Activated CD8-positive, alpha-beta T cell treated with anti-CD3 and anti-CD28 coated beads, Interleukin-2, amount 10 ng/mL, durations not matched to agents 7 days and 5 days (primary cell): ENCODE measurements at regions of chr12 and their contacts with region 1.

Region 1: GRCh38 chr12:21677622-21678277 is 20.1 kb upstream of the LDHB start:
- DNase-seq: no peak
- ATAC-seq: no peak
- H3K4me3 Mint-ChIP-seq: no peak overlapping the region
- H3K27ac Mint-ChIP-seq: no peak overlapping the region
- H3K4me1 Mint-ChIP-seq: peaks cover 32% of the 10 kb centered on the region
- H3K27me3 Mint-ChIP-seq: no peaks in the 10 kb centered on the region

Region 2: DNA sequence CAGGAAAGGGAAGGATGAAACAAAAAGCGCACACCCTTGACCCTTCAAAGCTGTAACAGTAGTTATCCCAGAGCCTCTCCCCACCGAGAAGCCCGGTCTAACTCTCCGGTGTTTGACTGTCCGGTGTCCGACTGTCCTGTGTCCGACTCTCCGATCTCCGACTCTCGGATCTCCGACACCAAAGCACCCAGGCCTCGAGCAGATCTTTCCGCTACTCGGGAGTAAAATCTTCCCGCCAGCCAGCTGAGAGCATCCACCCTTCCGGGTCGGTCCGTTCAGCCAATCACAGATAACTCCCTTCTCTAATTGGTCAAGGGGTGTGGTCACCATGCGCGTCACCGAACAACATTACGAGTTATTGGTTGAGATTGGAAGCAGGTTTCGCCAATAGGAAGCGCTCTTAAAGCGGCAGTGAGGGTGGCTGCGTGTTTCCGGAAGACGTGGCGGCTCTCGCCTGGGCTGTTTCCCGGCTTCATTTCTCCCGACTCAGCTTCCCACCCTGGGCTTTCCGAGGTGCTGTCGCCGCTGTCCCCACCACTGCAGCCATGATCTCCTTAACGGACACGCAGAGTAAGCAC is 176.3 kb before region 1 on chr12 and contains the starts of genes GOLT1B and RECQL:
- CTCF ChIA-PET with region 1: interaction called, 15 read pairs
- POLR2A ChIA-PET with region 1: interaction called, 4 read pairs
- DNase-seq: peak; percentile 96
- ATAC-seq: peak; percentile 95
- H3K4me3 Mint-ChIP-seq: no peak within 1 kb of the TSS
- H3K27ac Mint-ChIP-seq: no peak within 1 kb of the TSS
- H3K4me1 Mint-ChIP-seq: peaks cover 54% of the 10 kb centered on the region
- H3K27me3 Mint-ChIP-seq: no peaks in the 10 kb centered on the region
- total RNA-seq, gene GOLT1B: 37.3 to 37.5 TPM
- total RNA-seq, gene RECQL: 92.3 to 92.6 TPM

Region 3: DNA sequence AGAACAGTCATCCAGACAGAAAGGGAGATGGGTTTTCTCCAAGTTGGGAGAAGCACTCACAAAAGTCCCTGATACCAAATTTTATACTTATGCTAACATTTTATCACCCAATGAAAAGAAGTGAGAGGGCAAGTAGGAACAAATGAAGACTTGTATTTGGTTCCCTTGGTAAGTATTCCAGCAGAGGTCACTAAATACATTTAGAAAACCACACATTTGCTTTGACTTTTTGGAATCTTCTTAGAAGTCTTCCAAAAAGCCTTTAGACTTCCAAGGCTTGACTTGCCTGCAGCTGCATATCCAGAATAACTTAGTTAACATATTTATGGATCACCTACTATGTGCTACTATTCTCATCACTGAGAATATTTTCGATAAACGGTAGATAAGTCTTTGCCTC is 70.0 kb before region 1 on chr12:
- CTCF ChIA-PET with region 1: interaction called, 35 read pairs
- POLR2A ChIA-PET with region 1: no interaction called
- DNase-seq: no peak
- ATAC-seq: no peak
- H3K4me3 Mint-ChIP-seq: no peak overlapping the region
- H3K27ac Mint-ChIP-seq: no peak overlapping the region
- H3K4me1 Mint-ChIP-seq: no peaks in the 10 kb centered on the region
- H3K27me3 Mint-ChIP-seq: peaks cover 7% of the 10 kb centered on the region

Region 4: GRCh38 chr12:21642707-21643389 is 34.9 kb before region 1 on chr12:
- CTCF ChIA-PET with region 1: interaction called, 22 read pairs
- POLR2A ChIA-PET with region 1: no interaction called
- DNase-seq: no peak
- ATAC-seq: no peak
- H3K4me3 Mint-ChIP-seq: no peak overlapping the region
- H3K27ac Mint-ChIP-seq: no peak overlapping the region
- H3K4me1 Mint-ChIP-seq: peaks cover 59% of the 10 kb centered on the region
- H3K27me3 Mint-ChIP-seq: no peaks in the 10 kb centered on the region

Region 5: GRCh38 chr12:21650833-21651396 is 26.8 kb before region 1 on chr12:
- CTCF ChIA-PET with region 1: interaction called, 17 read pairs
- POLR2A ChIA-PET with region 1: interaction called, 4 read pairs
- DNase-seq: no peak
- ATAC-seq: no peak
- H3K4me3 Mint-ChIP-seq: no peak overlapping the region
- H3K27ac Mint-ChIP-seq: no peak overlapping the region
- H3K4me1 Mint-ChIP-seq: peaks cover 68% of the 10 kb centered on the region
- H3K27me3 Mint-ChIP-seq: no peaks in the 10 kb centered on the region

Region 6: GRCh38 chr12:21657326-21658077 is 20.2 kb before region 1 on chr12 and contains the start of gene LDHB:
- CTCF ChIA-PET with region 1: interaction called, 21 read pairs
- POLR2A ChIA-PET with region 1: interaction called, 27 read pairs
- DNase-seq: peak; percentile 98
- ATAC-seq: peak; percentile 97
- H3K4me3 Mint-ChIP-seq: peak within 1 kb of the TSS; percentile 99
- H3K27ac Mint-ChIP-seq: peak within 1 kb of the TSS; percentile 100
- H3K4me1 Mint-ChIP-seq: peaks cover 34% of the 10 kb centered on the region
- H3K27me3 Mint-ChIP-seq: no peaks in the 10 kb centered on the region
- total RNA-seq, gene LDHB: 1,063 to 1,149 TPM

Region 7: DNA sequence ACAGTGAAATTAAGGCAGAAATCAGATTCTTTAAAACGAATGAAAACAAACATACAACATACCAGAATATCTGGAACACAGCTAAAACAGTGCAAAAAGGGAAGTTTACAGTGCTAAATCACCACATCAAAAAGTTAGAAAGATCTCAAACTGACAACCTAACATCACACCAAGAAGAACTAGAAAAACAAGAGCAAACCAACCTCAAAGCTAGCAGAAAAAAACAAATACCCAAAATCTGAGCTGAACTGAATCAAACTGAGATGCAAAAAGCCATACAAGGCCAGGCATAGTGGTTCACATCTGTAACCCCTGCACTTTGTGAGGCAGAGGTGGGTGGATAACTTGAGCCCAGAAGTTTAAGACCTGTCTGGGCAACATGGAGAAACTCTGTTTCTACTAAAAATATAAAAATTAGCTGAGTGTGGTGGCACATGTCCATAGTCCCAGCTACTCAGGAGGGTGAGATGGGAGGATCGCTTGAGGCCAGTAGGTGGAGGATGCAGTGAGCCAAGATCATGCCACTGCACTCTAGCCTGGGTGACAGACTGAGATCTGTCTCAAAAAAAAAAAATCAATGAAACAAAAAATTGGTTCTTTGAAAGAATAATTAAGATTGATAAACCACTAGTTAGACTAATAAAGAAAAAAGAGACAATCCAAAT is 13.1 kb after region 1 on chr12:
- CTCF ChIA-PET with region 1: interaction called, 13 read pairs
- POLR2A ChIA-PET with region 1: no interaction called
- DNase-seq: no peak
- ATAC-seq: no peak
- H3K4me3 Mint-ChIP-seq: no peak overlapping the region
- H3K27ac Mint-ChIP-seq: no peak overlapping the region
- H3K4me1 Mint-ChIP-seq: peaks cover 4% of the 10 kb centered on the region
- H3K27me3 Mint-ChIP-seq: no peaks in the 10 kb centered on the region